B cell (primary cell): ENCODE measurements at regions of chr18 and their contacts with region 1.

Region 1: DNA sequence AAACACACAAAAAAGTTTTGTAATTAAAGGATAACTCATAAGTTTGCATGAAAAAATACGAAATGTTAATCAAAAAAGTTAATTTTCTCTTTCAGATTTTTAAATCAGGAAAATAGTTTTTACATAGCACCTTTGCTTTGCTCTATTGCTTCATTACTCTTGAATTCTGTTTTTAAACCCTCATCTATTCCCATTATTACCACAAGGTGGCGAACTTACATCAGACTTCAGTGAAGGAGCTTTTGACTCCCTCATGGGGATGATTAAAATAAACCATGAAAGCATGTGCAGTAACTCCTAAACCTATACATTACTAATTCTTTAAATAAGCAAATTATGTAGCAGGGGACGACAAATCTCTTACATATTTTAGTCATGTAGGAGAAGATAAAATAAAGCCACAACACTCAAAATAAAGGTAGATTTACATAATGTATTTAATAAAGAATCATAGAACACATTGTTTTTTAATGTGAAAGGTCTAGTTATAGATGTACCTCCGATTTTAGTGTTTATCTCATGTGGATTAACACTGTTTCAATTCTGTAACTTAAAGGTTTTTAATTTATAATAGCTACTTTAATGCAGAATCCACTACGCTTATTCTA is 105.2 kb downstream of the NETO1 start:
- DNase-seq: peak; percentile 73
- ATAC-seq: peak; percentile 58
- H3K4me3 ChIP-seq: no peak overlapping the region
- H3K4me3 Mint-ChIP-seq: no peak overlapping the region
- H3K27ac ChIP-seq: no peak overlapping the region
- H3K27ac Mint-ChIP-seq: no peak overlapping the region
- H3K4me1 ChIP-seq: no peaks in the 10 kb centered on the region
- H3K4me1 Mint-ChIP-seq: no peaks in the 10 kb centered on the region
- H3K27me3 ChIP-seq: no peaks in the 10 kb centered on the region
- H3K27me3 Mint-ChIP-seq: no peaks in the 10 kb centered on the region
- CTCF ChIP-seq: peak; percentile 91

Region 2: DNA sequence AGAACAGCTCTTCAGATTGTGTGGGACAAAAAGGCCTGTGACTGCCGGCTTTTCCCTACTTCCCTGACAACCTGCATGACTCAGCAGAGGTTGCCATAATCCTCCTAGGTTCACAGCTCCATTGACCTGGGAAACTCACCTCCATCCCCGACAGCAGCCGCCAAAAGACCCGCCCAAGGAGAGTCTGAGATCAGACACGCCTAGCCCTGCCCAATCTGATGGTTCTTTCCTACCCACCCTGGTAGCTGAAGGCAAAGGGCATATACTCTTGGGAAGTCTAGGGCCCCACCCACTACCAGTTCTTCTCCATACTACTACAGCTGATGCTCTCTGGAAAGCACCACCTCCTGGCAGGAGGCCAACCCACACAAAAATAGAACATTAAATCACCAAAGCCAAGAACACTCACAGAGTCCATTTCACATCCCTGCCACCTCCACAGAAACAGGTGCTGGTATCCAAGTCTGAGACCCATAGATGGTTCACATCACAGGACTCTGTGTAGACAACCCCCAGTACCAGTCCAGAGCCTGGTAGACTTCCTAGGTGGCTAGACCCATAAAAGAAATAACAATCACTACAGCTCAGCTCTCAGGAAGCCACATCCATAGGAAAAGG is 35.5 kb before region 1 on chr18:
- CTCF ChIA-PET with region 1: no interaction called
- POLR2A ChIA-PET with region 1: no interaction called
- intact Hi-C with region 1: no loop called
- DNase-seq: no peak
- ATAC-seq: no peak
- H3K4me3 ChIP-seq: no peak overlapping the region
- H3K4me3 Mint-ChIP-seq: no peak overlapping the region
- H3K27ac ChIP-seq: no peak overlapping the region
- H3K27ac Mint-ChIP-seq: no peak overlapping the region
- H3K4me1 ChIP-seq: no peaks in the 10 kb centered on the region
- H3K4me1 Mint-ChIP-seq: no peaks in the 10 kb centered on the region
- H3K27me3 ChIP-seq: peaks cover 0 to 5% (median 1%) of the 10 kb centered on the region in 4 experiments
- H3K27me3 Mint-ChIP-seq: no peaks in the 10 kb centered on the region
- CTCF ChIP-seq: no peak

Region 3: GRCh38 chr18:72752220-72752619 is 10.4 kb before region 1 on chr18:
- CTCF ChIA-PET with region 1: interaction called, 25 read pairs
- POLR2A ChIA-PET with region 1: no interaction called
- intact Hi-C with region 1: no loop called
- DNase-seq: no peak
- ATAC-seq: no peak
- H3K4me3 ChIP-seq: no peak overlapping the region
- H3K4me3 Mint-ChIP-seq: no peak overlapping the region
- H3K27ac ChIP-seq: no peak overlapping the region
- H3K27ac Mint-ChIP-seq: no peak overlapping the region
- H3K4me1 ChIP-seq: no peaks in the 10 kb centered on the region
- H3K4me1 Mint-ChIP-seq: no peaks in the 10 kb centered on the region
- H3K27me3 ChIP-seq: no peaks in the 10 kb centered on the region
- H3K27me3 Mint-ChIP-seq: no peaks in the 10 kb centered on the region
- CTCF ChIP-seq: no peak

Region 4: GRCh38 chr18:73842795-73843394 is 1080.3 kb after region 1 on chr18:
- CTCF ChIA-PET with region 1: interaction called, 27 read pairs
- POLR2A ChIA-PET with region 1: no interaction called
- intact Hi-C with region 1: no loop called
- DNase-seq: peak; percentile 57
- ATAC-seq: peak; percentile 71
- H3K4me3 ChIP-seq: peak overlapping the region in 1 of 5 experiments; percentile 34
- H3K4me3 Mint-ChIP-seq: peak overlapping the region; percentile 57
- H3K27ac ChIP-seq: no peak overlapping the region
- H3K27ac Mint-ChIP-seq: no peak overlapping the region
- H3K4me1 ChIP-seq: no peaks in the 10 kb centered on the region
- H3K4me1 Mint-ChIP-seq: peaks cover 3% of the 10 kb centered on the region
- H3K27me3 ChIP-seq: peaks cover 0 to 4% (median 0%) of the 10 kb centered on the region in 4 experiments
- H3K27me3 Mint-ChIP-seq: peaks cover 5% of the 10 kb centered on the region
- CTCF ChIP-seq: peak; percentile 98